ENCODE measurements at regions of chr22 and their contacts with region 1.

Region 1: DNA sequence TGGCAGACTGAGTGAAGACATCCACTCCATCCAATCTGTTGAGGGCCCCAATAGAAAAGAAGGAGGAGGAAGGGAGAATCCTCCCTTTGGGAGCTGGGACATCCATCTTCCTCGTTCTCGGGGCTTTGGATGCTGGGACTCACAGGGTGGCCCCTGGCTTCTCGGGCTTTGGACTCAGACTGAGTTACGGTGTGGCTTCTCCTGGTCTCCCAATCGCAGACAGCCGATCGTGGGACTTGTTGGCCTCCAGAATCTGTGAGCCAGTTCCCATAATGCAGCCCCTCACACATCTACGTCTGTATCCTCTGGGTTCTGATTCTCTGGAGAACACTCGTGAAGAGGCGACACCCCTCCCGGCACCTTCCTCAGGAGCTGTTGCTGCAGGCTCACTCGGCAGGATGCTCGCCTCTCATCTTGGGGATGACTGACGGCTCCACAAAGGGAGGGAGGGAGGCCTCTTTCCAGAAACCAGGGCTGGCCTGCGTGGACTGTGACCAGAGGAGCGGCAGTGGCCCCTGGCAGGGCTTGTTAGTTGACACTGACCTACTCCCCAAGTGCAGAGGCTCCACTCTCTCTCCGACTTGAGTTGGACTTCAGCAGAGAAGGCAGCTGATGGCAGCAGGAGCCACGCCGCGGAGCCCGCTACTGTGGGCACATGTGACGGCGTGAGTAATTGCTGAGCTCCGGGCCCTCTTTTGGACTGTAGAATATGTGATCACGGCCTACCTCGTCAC is 14.7 kb upstream of the TTLL12 start:
- DNase-seq: no peak
- H3K4me3 ChIP-seq: no peak overlapping the region
- H3K4me3 Mint-ChIP-seq: no peak overlapping the region
- H3K27ac Mint-ChIP-seq: no peak overlapping the region
- H3K4me1 ChIP-seq: no peaks in the 10 kb centered on the region
- H3K4me1 Mint-ChIP-seq: no peaks in the 10 kb centered on the region
- H3K27me3 ChIP-seq: no peaks in the 10 kb centered on the region
- H3K27me3 Mint-ChIP-seq: no peaks in the 10 kb centered on the region
- CTCF ChIP-seq: no peak

Region 2: DNA sequence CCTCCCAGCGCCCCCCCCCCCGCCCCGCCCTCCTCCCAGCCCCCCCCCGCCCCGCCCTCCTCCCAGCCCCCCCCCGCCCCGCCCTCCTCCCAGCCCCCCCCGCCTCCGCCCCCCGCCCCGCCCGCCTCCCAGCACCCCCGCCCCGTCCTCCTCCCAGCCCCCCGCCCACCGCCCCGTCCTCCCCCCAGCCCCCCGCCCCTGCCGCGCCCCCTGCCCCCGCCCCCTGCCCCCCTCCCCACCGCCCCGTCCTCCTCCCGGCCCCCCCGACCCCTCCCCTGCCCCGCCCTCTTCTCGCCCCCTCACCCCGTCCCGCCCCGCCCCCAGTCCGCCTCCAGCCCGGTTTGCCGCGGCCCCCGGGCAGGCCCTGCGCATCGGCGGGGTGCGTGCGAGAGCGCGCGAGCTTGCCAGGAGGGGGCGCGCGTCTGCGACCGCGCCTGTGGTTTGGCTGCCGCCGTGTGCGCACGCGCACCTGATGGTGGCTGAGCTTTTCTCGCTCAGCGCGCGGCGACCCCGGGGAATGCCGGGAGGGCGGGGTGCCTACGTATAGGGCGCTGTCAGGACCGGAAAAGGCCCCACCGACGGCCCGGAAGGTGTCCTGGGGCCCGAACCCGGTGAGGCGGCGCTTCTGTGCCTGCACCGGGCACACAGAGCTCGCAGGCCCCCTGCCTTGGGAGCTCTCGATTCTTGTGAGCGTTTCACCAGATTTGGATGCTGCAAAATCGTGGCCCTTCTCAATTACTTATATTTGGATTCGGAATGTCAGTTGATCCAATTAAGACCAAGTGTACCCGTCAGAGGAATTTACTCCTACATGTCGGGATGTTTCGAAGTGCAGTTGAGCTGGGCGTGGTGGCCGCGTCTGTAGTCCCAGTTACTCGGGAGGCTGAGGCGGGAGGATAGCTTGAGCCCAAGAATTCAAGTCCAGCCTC is 14.2 kb before region 1 on chr22:
- CTCF ChIA-PET with region 1: interaction called, 4 read pairs
- POLR2A ChIA-PET with region 1: interaction called, 12 read pairs
- intact Hi-C with region 1: no loop called
- DNase-seq: peak; percentile 95 to 98
- H3K4me3 ChIP-seq: peak overlapping the region; percentile 42
- H3K4me3 Mint-ChIP-seq: peak overlapping the region; percentile 83
- H3K27ac Mint-ChIP-seq: peak overlapping the region; percentile 93
- H3K4me1 ChIP-seq: peaks cover 16% of the 10 kb centered on the region; the same call in 1 of the 2 replicates
- H3K4me1 Mint-ChIP-seq: peaks cover 23% of the 10 kb centered on the region
- H3K27me3 ChIP-seq: no peaks in the 10 kb centered on the region
- H3K27me3 Mint-ChIP-seq: no peaks in the 10 kb centered on the region
- CTCF ChIP-seq: peak; percentile 52 to 59

Measured in Caco-2 (cell line).